H1 (cell line): ENCODE measurements at regions of chr14 and their contacts with region 1.

Region 1: GRCh38 chr14:21203470-21204166 is 47.8 kb upstream of the OR5AU1 start:
- DNase-seq: no peak
- H3K4me3 ChIP-seq: no peak overlapping the region
- H3K27ac ChIP-seq: no peak overlapping the region
- H3K4me1 ChIP-seq: peaks cover 0 to 9% (median 2%) of the 10 kb centered on the region in 4 experiments; a peak in 5 of 7 replicates
- H3K27me3 ChIP-seq: no peaks in the 10 kb centered on the region
- CTCF ChIP-seq: no peak
- EP300 ChIP-seq: no peak
- POLR2A ChIP-seq: peak; percentile 7 to 57; a peak in 2 of 3 replicates
- RAD21 ChIP-seq: no peak

Region 2: GRCh38 chr14:21191809-21192446 is 11.7 kb before region 1 on chr14:
- CTCF ChIA-PET with region 1: interaction called, 3 read pairs
- POLR2A ChIA-PET with region 1: interaction called, 101 read pairs
- DNase-seq: peak; percentile 82 to 86
- H3K4me3 ChIP-seq: peak overlapping the region in 3 of 4 experiments; percentile 18 to 46 (median 32); a peak in 6 of 8 replicates
- H3K27ac ChIP-seq: no peak overlapping the region
- H3K4me1 ChIP-seq: peaks cover 4 to 8% (median 6%) of the 10 kb centered on the region in 4 experiments; a peak in 6 of 7 replicates
- H3K27me3 ChIP-seq: no peaks in the 10 kb centered on the region; a peak in 1 of 7 replicates
- CTCF ChIP-seq: no peak
- EP300 ChIP-seq: no peak
- POLR2A ChIP-seq: peak in 1 of 2 experiments; percentile 48; a peak in 1 of 3 replicates
- RAD21 ChIP-seq: no peak

Region 3: DNA sequence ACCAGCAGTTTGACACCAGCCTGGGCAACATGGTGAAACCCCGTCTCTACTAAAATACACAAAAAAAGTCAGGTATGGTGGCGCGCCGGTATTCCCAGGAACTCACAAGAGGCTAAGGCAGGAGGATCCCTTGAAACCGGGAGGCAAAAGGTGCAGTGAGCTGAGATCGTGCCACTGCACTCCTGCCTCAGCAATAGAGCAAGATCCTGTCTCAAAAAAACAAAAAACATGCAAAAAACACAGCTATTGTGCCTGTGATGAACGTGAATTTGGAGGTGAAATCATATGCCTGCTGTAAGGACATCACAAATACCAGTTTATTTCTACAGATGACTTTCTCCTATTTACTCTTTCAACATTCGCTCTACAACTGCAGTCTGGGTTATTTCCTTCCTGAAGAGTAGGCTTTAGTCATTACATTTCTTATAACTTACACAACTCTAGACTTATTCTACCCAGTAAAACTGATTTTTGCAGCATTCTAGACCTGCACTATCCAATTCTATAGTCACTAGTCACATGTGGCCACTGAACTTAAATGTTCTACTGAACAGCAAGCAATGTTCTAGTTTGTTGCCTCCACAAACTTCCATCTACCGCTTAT is 17.4 kb after region 1 on chr14:
- CTCF ChIA-PET with region 1: no interaction called
- POLR2A ChIA-PET with region 1: interaction called, 97 read pairs
- DNase-seq: no peak
- H3K4me3 ChIP-seq: no peak overlapping the region
- H3K27ac ChIP-seq: 0 out of 2 replicates have a peak overlapping the region, but pooled peaks have one; percentile 13
- H3K4me1 ChIP-seq: peaks cover 0 to 2% (median 0%) of the 10 kb centered on the region in 4 experiments; a peak in 2 of 7 replicates
- H3K27me3 ChIP-seq: no peaks in the 10 kb centered on the region
- CTCF ChIP-seq: no peak
- EP300 ChIP-seq: no peak
- POLR2A ChIP-seq: no peak
- RAD21 ChIP-seq: no peak